Activated naive CD8-positive, alpha-beta T cell treated with anti-CD3 and anti-CD28 coated beads, Interleukin-2, amount 10 ng/mL, durations not matched to agents 7 days and 5 days (primary cell): ENCODE measurements at regions of chr1 and their contacts with region 1.

Region 1: DNA sequence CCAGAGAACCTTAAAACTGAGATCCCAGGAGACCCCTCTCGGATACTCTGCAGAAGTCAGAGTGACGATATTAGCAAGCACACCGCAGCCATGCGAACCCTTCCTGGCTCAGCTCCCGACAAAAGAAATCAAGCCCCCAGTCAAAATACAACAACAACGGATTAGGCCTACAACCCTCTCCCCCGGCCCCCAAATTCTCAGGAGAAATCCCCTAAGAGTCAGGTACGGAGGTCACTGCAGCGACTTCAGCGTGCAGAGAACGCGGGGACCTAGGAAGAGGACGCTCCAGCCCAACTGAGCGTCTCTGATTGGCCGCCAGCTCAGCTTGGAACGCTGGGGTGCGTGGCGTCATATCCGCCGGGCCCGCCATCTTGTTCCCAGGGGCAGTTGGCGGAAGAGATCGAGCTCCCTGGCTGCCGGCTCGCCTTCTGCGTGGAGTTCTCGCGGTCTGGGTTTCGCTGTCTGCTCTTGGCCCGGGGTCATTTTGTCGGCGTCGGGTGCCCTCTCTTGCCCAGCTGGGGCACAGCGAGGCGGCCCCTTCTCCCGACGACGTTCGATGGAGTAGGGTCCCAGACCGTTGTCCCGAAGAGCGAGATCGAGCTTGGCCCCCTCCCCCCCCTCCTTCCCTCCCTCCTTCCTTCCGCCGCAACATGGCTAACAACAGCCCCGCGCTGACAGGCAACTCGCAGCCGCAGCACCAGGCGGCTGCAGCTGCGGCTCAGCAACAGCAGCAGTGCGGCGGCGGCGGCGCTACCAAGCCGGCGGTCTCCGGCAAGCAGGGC is at the start of gene PRPF38B:
- DNase-seq: peak; percentile 93
- ATAC-seq: peak; percentile 84
- H3K4me3 Mint-ChIP-seq: peak within 1 kb of the TSS; percentile 95
- H3K27ac Mint-ChIP-seq: peak within 1 kb of the TSS; percentile 99
- H3K4me1 Mint-ChIP-seq: peaks cover 28% of the 10 kb centered on the region
- H3K27me3 Mint-ChIP-seq: peaks cover 2% of the 10 kb centered on the region
- total RNA-seq, gene PRPF38B: 85.9 to 91.2 TPM

Region 2: DNA sequence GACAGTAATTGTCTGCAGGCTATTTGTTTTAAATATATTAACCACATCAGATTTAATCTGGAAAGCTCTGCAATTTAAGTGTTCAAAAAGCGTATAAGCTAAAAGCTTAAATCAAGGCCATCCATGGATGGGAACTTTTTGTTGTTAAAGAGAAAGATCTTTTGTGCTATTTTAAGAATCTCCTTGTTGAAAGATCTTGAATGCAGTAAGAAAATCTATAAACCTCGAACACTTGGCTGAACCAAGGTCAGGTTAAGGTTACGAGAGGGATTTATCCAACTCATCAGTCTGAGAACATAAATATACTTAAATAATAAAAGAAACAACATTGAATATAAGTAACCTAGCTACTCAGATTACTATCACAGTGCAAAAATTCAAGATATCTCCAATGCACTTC is 143.7 kb before region 1 on chr1:
- POLR2A ChIA-PET with region 1: no interaction called
- DNase-seq: no peak
- ATAC-seq: no peak
- H3K4me3 Mint-ChIP-seq: no peak overlapping the region
- H3K27ac Mint-ChIP-seq: no peak overlapping the region
- H3K4me1 Mint-ChIP-seq: no peaks in the 10 kb centered on the region
- H3K27me3 Mint-ChIP-seq: peaks cover 21% of the 10 kb centered on the region

Region 3: GRCh38 chr1:108559215-108560186 is 132.6 kb before region 1 on chr1 and contains the start of gene EEIG2:
- POLR2A ChIA-PET with region 1: interaction called, 39 read pairs
- DNase-seq: peak; percentile 96
- ATAC-seq: peak; percentile 80
- H3K4me3 Mint-ChIP-seq: peak within 1 kb of the TSS; percentile 96
- H3K27ac Mint-ChIP-seq: peak within 1 kb of the TSS; percentile 91
- H3K4me1 Mint-ChIP-seq: peaks cover 23% of the 10 kb centered on the region
- H3K27me3 Mint-ChIP-seq: no peaks in the 10 kb centered on the region
- total RNA-seq, gene EEIG2: 16.5 TPM

Region 4: GRCh38 chr1:108661030-108661620 is 31.0 kb before region 1 on chr1 and contains the start of gene HENMT1:
- POLR2A ChIA-PET with region 1: interaction called, 175 read pairs
- DNase-seq: peak; percentile 87
- ATAC-seq: peak; percentile 82
- H3K4me3 Mint-ChIP-seq: peak within 1 kb of the TSS; percentile 86
- H3K27ac Mint-ChIP-seq: peak within 1 kb of the TSS; percentile 96
- H3K4me1 Mint-ChIP-seq: peaks cover 31% of the 10 kb centered on the region
- H3K27me3 Mint-ChIP-seq: no peaks in the 10 kb centered on the region
- total RNA-seq, gene HENMT1: 32.3 to 33.0 TPM

Region 5: DNA sequence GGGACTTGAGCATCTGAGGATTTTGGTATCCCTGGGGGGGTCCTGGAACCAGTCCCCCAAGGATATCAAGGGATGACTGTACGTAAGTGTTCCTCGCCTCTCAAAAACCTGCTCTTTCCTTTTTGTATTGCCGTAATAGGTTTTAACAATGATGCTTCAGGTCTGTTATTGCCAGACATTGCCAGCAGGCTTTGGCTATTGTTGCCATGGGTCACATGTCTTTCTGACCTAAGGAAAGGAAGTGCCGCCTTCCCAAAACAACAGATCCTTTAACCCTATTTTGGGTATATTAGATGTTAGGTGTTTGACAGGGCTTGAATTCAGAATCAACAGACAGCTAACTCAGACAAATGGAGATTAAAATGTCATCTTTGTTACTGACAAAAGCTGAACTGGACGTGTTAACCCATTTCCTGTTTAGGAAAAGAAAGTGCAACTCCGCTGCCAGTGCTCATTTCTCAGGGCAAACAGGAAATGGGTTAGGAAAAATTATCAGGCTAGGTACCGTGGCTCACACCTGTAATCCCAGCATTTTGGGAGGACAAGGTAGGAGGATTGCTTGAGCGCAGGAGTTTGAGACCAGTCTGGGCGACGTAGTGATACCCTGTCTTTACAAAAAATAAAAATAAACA is 12.4 kb before region 1 on chr1:
- POLR2A ChIA-PET with region 1: interaction called, 24 read pairs
- DNase-seq: no peak
- ATAC-seq: no peak
- H3K4me3 Mint-ChIP-seq: peak overlapping the region; percentile 54
- H3K27ac Mint-ChIP-seq: peak overlapping the region; percentile 40
- H3K4me1 Mint-ChIP-seq: peaks cover 12% of the 10 kb centered on the region
- H3K27me3 Mint-ChIP-seq: peaks cover 6% of the 10 kb centered on the region

Region 6: GRCh38 chr1:108801101-108801500 is 109.0 kb after region 1 on chr1:
- POLR2A ChIA-PET with region 1: no interaction called
- DNase-seq: no peak
- ATAC-seq: no peak
- H3K4me3 Mint-ChIP-seq: no peak overlapping the region
- H3K27ac Mint-ChIP-seq: no peak overlapping the region
- H3K4me1 Mint-ChIP-seq: peaks cover 4% of the 10 kb centered on the region
- H3K27me3 Mint-ChIP-seq: no peaks in the 10 kb centered on the region

Region 7: GRCh38 chr1:109099938-109100773 is 408.0 kb after region 1 on chr1:
- POLR2A ChIA-PET with region 1: interaction called, 17 read pairs
- DNase-seq: peak; percentile 94
- ATAC-seq: peak; percentile 95
- H3K4me3 Mint-ChIP-seq: peak overlapping the region; percentile 93
- H3K27ac Mint-ChIP-seq: peak overlapping the region; percentile 95
- H3K4me1 Mint-ChIP-seq: peaks cover 11% of the 10 kb centered on the region
- H3K27me3 Mint-ChIP-seq: no peaks in the 10 kb centered on the region